ENCODE measurements at regions of chr18 and their contacts with region 1.

Region 1: DNA sequence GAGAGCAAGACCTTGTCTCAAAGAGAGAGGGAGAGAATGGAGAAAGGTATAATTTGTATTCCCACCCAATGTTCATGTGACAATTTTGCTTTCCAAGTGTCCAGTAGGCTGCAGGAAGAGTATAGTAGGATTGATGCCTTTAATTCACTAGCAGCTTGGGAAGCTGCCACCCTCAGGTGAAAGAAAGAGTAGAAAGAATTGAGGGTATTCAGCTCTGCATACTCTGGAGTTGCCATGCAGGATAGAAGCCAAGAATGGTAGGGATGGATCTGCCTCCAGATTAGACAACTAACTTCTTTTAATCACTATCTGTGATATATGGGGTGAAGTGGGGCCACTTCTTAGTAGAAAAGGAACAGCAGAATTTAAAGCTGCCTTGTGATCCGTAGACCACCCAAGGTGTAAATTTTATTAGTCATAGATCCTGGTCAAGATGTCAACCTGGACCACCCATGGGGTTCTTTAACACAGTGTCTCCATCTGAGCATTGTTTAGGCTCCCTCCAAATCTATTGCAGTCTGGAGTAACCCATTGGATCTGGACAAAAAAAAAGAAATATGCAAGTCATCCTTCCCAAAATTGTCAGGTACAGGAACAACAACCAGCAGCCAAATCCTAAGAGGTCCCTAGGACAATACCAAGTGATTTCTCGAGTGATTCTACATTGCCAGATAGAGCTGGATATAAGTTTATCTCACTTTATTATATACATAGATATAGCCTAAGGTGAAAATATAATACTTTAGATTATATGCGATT is 33.1 kb upstream of the DTNA start:
- DNase-seq: no peak
- ATAC-seq: no peak
- H3K4me3 ChIP-seq: no peak overlapping the region
- H3K4me3 Mint-ChIP-seq: no peak overlapping the region
- H3K27ac ChIP-seq: no peak overlapping the region
- H3K27ac Mint-ChIP-seq: no peak overlapping the region
- H3K4me1 ChIP-seq: no peaks in the 10 kb centered on the region
- H3K4me1 Mint-ChIP-seq: no peaks in the 10 kb centered on the region
- H3K27me3 ChIP-seq: no peaks in the 10 kb centered on the region
- H3K27me3 Mint-ChIP-seq: no peaks in the 10 kb centered on the region
- CTCF ChIP-seq: no peak

Region 2: DNA sequence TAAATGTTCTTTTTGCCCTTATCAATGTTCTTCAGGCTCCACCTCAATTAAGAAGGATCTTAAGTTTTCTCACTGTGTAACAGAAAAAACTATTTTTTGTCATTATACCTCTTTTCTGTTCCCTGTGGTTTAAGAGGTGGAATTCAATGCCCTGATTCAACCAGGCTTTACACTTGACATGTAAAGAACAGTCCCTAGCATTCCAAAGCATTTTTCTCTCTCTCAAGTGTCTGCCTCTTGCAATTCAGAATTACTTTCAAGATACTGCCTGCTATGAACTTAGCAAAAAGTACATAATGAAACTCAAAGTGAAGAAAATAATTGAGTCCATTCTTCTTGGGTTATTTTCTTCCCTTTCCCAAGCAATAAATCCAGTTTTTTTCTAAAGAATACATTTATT is 291.7 kb before region 1 on chr18:
- CTCF ChIA-PET with region 1: no interaction called
- POLR2A ChIA-PET with region 1: no interaction called
- intact Hi-C with region 1: no loop called
- DNase-seq: no peak
- ATAC-seq: no peak
- H3K4me3 ChIP-seq: no peak overlapping the region
- H3K4me3 Mint-ChIP-seq: no peak overlapping the region
- H3K27ac ChIP-seq: no peak overlapping the region
- H3K27ac Mint-ChIP-seq: no peak overlapping the region
- H3K4me1 ChIP-seq: no peaks in the 10 kb centered on the region
- H3K4me1 Mint-ChIP-seq: no peaks in the 10 kb centered on the region
- H3K27me3 ChIP-seq: no peaks in the 10 kb centered on the region
- H3K27me3 Mint-ChIP-seq: no peaks in the 10 kb centered on the region
- CTCF ChIP-seq: no peak

Region 3: GRCh38 chr18:34661464-34662111 is 15.4 kb before region 1 on chr18:
- CTCF ChIA-PET with region 1: interaction called, 17 read pairs
- POLR2A ChIA-PET with region 1: no interaction called
- intact Hi-C with region 1: no loop called
- DNase-seq: peak in 2 of 9 experiments; percentile 19 to 35
- ATAC-seq: no peak
- H3K4me3 ChIP-seq: no peak overlapping the region
- H3K4me3 Mint-ChIP-seq: no peak overlapping the region
- H3K27ac ChIP-seq: no peak overlapping the region
- H3K27ac Mint-ChIP-seq: no peak overlapping the region
- H3K4me1 ChIP-seq: no peaks in the 10 kb centered on the region
- H3K4me1 Mint-ChIP-seq: no peaks in the 10 kb centered on the region
- H3K27me3 ChIP-seq: no peaks in the 10 kb centered on the region
- H3K27me3 Mint-ChIP-seq: peaks cover 11% of the 10 kb centered on the region
- CTCF ChIP-seq: peak; percentile 68